ENCODE measurements at regions of chr14 and their contacts with region 1.

Region 1: DNA sequence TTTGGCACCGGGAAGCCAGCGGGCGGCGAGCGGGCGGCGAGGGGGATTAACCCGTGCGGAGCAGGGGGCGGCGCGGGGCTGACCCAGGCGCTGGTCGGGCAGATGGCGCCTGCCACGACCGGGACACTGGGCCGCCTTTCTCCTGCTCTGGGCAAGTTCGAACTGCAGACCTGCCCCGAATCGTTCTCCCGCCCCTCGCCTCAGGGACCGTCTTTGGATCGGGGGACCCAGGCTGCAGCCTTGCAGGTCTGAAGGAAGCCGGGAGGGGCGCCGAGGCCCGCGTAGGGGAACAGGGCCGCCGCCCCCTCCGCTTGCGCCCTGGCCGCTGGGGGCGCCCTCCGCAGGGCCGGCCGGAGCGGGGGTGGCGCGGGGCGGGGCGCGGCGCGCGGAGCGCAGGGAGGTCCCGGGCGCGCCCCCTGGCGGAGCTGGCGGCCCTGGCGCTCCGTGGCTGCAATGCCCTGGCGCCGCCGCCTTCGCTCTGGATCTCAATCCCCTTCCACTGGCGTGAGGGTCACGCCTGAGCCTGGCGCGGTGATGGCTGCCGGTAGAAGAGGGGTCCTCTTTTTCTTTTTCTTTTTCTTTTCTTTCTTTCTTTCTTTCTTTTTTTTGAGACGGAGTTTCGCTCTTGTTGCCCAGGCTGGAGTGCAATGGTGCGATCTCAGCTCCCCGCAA is 449 bp upstream of the LTBP2 start:
- DNase-seq: peak; percentile 87
- ATAC-seq: peak; percentile 81 to 89

Region 2: GRCh38 chr14:74362361-74362915 is 250.0 kb before region 1 on chr14:
- intact Hi-C with region 1: loop called in 1 of 2 experiments (anchors 10 kb)
- DNase-seq: peak; percentile 83
- ATAC-seq: peak; percentile 88 to 90

Region 3: GRCh38 chr14:74501135-74501614 is 111.3 kb before region 1 on chr14:
- intact Hi-C with region 1: loop called (anchors 5 to 10 kb)
- DNase-seq: peak; percentile 87
- ATAC-seq: peak; percentile 59 to 78

Region 4: DNA sequence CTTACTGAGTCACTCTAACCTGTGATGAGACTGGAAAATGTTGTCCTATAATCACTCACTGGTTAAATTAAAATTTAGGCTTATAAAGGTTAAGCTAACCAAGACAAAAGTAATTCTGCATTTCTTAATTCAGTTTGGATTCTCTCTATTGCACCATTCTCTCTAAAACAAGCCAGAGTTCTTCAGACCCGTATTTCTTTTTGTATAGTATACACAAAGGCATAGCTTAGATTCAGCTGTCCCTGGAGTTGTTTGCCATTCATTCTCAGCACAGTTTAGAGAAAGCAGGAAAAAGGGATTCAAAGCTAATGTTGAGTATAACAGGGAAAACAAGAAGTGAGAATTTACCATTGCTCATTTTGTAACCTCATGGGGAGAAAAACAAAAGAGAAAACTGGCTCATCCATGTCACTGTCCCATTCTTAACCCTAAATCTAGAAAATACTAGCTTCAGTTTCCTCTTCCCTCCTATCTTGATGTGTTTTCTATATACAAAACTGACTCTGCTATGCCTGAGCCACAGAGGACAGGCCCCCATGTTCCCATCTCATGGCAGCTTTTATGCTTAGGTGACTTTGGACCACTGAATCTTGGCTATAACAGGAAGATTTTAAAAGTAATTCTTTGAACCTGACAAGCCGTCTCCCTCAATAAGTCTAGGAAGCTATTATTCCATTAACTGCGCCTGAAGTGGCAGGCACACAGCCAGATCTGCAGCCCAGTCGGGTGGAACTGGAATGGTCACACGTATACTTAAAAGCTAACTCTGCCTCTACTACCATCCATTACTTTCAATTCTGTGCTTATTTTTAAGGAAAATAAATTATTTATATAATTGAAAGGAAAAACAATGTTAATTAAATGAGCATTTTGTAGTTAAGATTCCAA is 93.4 kb after region 1 on chr14:
- intact Hi-C with region 1: loop called in 1 of 2 experiments (anchors 10 kb)
- DNase-seq: no peak
- ATAC-seq: no peak

Region 5: GRCh38 chr14:74804219-74804826 is 191.8 kb after region 1 on chr14:
- intact Hi-C with region 1: loop called in 1 of 2 experiments (anchors 10 kb)
- DNase-seq: no peak
- ATAC-seq: peak in 1 of 2 donors; percentile 57